Heart right ventricle (tissue), 16 donors: ENCODE measurements at regions of chr19 and their contacts with region 1.

Region 1: GRCh38 chr19:41123716-41124294 is 9.6 kb downstream of the CYP2F1 start:
- DNase-seq: no peak
- ATAC-seq: no peak
- H3K4me3 ChIP-seq: no peak overlapping the region
- H3K27ac ChIP-seq: no peak overlapping the region
- H3K4me1 ChIP-seq: peaks cover 0 to 8% (median 5%) of the 10 kb centered on the region in 9 donors
- H3K27me3 ChIP-seq: peaks cover 0 to 5% (median 0%) of the 10 kb centered on the region in 7 donors
- CTCF ChIP-seq: no peak

Region 2: DNA sequence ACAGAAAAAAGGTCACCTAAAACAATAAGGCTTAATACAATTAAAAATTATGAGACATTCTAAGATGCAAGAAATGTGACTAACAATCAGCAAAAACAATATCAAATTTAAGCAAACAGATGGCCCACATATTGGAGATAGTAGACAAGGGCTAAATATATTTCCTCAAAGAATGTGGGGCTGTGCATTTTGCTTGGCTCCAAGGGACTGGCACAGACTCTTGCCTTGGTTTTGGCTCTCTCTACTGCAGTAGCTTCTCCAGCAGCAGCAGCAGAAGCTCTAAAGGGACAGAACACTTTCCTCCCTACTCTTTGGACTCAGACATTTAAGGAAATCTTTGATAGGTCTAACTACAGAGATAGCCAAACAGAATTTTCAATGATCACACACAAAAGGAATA is 994.8 kb before region 1 on chr19:
- intact Hi-C with region 1: loop called in 1 of 10 experiments (anchors 5 kb)
- DNase-seq: no peak
- ATAC-seq: no peak
- H3K4me3 ChIP-seq: no peak overlapping the region
- H3K27ac ChIP-seq: no peak overlapping the region
- H3K4me1 ChIP-seq: no peaks in the 10 kb centered on the region
- H3K27me3 ChIP-seq: peaks cover 0 to 45% (median 28%) of the 10 kb centered on the region in 7 donors
- CTCF ChIP-seq: no peak